ENCODE measurements at regions of chr17 and their contacts with region 1.

Region 1: GRCh38 chr17:36629252-36629847 is 28.0 kb downstream of the MRM1 start:
- DNase-seq: peak; percentile 73 to 91 (median 82)
- H3K4me3 ChIP-seq: no peak overlapping the region
- H3K27ac ChIP-seq: no peak overlapping the region
- H3K4me1 ChIP-seq: no peaks in the 10 kb centered on the region
- H3K27me3 ChIP-seq: no peaks in the 10 kb centered on the region
- CTCF ChIP-seq: peak; percentile 89 to 99 (median 97)
- POLR2A ChIP-seq: no peak

Region 2: GRCh38 chr17:37047631-37048104 is 418.3 kb after region 1 on chr17:
- intact Hi-C with region 1: loop called in 1 of 2 experiments (anchors 2 kb)
- DNase-seq: peak; percentile 79 to 95 (median 87)
- H3K4me3 ChIP-seq: no peak overlapping the region
- H3K27ac ChIP-seq: no peak overlapping the region
- H3K4me1 ChIP-seq: peaks cover 0 to 9% of the 10 kb centered on the region in 2 donors
- H3K27me3 ChIP-seq: no peaks in the 10 kb centered on the region
- CTCF ChIP-seq: peak; percentile 78 to 87 (median 82)
- POLR2A ChIP-seq: no peak

Region 3: GRCh38 chr17:37098910-37099664 is 469.7 kb after region 1 on chr17:
- intact Hi-C with region 1: no loop called
- DNase-seq: no peak
- H3K4me3 ChIP-seq: no peak overlapping the region
- H3K27ac ChIP-seq: no peak overlapping the region
- H3K4me1 ChIP-seq: peaks cover 6 to 9% of the 10 kb centered on the region in 2 donors
- H3K27me3 ChIP-seq: no peaks in the 10 kb centered on the region
- CTCF ChIP-seq: no peak
- POLR2A ChIP-seq: no peak

Region 4: GRCh38 chr17:37174205-37174604 is 544.9 kb after region 1 on chr17:
- intact Hi-C with region 1: loop called in 1 of 2 experiments (anchors 10 kb)
- DNase-seq: peak; percentile 37 to 72 (median 43)
- H3K4me3 ChIP-seq: no peak overlapping the region
- H3K27ac ChIP-seq: no peak overlapping the region
- H3K4me1 ChIP-seq: no peaks in the 10 kb centered on the region
- H3K27me3 ChIP-seq: no peaks in the 10 kb centered on the region
- CTCF ChIP-seq: peak; percentile 21 to 57 (median 47)
- POLR2A ChIP-seq: no peak

Region 5: GRCh38 chr17:37206299-37206698 is 576.9 kb after region 1 on chr17:
- intact Hi-C with region 1: no loop called
- DNase-seq: no peak
- H3K4me3 ChIP-seq: no peak overlapping the region
- H3K27ac ChIP-seq: no peak overlapping the region
- H3K4me1 ChIP-seq: no peaks in the 10 kb centered on the region
- H3K27me3 ChIP-seq: no peaks in the 10 kb centered on the region
- CTCF ChIP-seq: no peak
- POLR2A ChIP-seq: no peak

Region 6: GRCh38 chr17:37220607-37220953 is 591.2 kb after region 1 on chr17:
- intact Hi-C with region 1: loop called in 1 of 2 experiments (anchors 10 kb)
- DNase-seq: peak in 4 of 7 donors; percentile 14 to 61 (median 28)
- H3K4me3 ChIP-seq: no peak overlapping the region
- H3K27ac ChIP-seq: no peak overlapping the region
- H3K4me1 ChIP-seq: no peaks in the 10 kb centered on the region
- H3K27me3 ChIP-seq: no peaks in the 10 kb centered on the region
- CTCF ChIP-seq: peak in 3 of 6 experiments; percentile 18 to 37 (median 33)
- POLR2A ChIP-seq: no peak